Activated B cell treated with CpG ODN at 0.5 μM for 24 hours (primary cell): ENCODE measurements at regions of chr6 and their contacts with region 1.

Region 1: GRCh38 chr6:137415127-137415833 is 78.9 kb downstream of the OLIG3 start:
- DNase-seq: peak; percentile 27
- ATAC-seq: peak; percentile 93
- H3K4me3 Mint-ChIP-seq: peak overlapping the region; percentile 84
- H3K27ac Mint-ChIP-seq: peak overlapping the region; percentile 61
- H3K4me1 Mint-ChIP-seq: peaks cover 11% of the 10 kb centered on the region
- H3K27me3 Mint-ChIP-seq: peaks cover 2% of the 10 kb centered on the region
- CTCF ChIP-seq: no peak

Region 2: GRCh38 chr6:136967876-136968752 is 447.2 kb before region 1 on chr6:
- CTCF ChIA-PET with region 1: no interaction called
- POLR2A ChIA-PET with region 1: no interaction called
- intact Hi-C with region 1: loop called (anchors 5 kb)
- DNase-seq: peak; percentile 39
- ATAC-seq: peak; percentile 93
- H3K4me3 Mint-ChIP-seq: no peak overlapping the region
- H3K27ac Mint-ChIP-seq: no peak overlapping the region
- H3K4me1 Mint-ChIP-seq: peaks cover 4% of the 10 kb centered on the region
- H3K27me3 Mint-ChIP-seq: peaks cover 12% of the 10 kb centered on the region
- CTCF ChIP-seq: peak; percentile 22

Region 3: GRCh38 chr6:137155830-137156229 is 259.4 kb before region 1 on chr6:
- CTCF ChIA-PET with region 1: no interaction called
- POLR2A ChIA-PET with region 1: interaction called, 12 read pairs
- intact Hi-C with region 1: no loop called
- DNase-seq: no peak
- ATAC-seq: peak; percentile 75
- H3K4me3 Mint-ChIP-seq: peak overlapping the region; percentile 52
- H3K27ac Mint-ChIP-seq: peak overlapping the region; percentile 59
- H3K4me1 Mint-ChIP-seq: peaks cover 21% of the 10 kb centered on the region
- H3K27me3 Mint-ChIP-seq: no peaks in the 10 kb centered on the region
- CTCF ChIP-seq: no peak

Region 4: DNA sequence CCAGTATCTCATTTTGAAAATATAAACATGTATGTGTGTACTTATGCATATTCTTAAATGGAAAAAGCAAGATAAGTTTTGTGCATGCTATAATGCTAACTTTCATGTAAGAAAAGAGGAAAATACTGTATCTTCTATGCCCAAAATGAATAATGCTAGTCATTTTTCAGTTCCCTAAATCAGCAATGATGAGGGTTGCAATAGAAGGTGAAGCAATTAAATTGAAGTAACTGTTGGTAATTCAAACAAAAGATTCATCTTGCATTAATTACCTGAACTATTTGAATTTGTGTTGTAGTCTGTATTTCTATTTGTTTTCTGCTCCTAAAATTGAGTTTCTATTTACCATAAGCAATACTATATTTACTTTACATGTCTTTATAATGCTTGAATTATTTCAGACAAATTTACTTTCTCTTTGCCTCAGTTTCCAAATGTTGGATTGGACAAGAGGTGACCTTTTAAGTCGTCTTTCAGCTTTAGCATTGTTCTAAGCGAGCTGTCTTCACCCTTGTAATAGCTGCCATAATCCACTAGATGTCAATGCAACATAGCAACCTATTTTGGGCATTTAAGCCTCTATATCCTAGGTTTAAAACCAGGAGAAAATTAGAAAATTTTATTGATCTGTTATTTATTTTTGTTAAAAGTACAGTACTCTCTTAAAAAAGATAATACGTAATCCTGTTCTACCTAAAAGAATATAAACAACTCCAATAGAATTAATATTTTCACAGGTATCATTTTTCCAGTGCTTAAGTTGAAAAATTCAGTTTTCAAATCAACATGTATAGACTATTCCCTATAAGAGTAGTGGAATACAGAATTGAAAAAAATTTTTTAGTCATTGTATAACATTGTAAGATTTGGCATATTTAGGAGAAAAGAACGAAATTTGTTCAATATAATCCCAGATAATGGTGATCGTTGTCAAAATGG is 143.8 kb before region 1 on chr6:
- CTCF ChIA-PET with region 1: no interaction called
- POLR2A ChIA-PET with region 1: no interaction called
- intact Hi-C with region 1: loop called (anchors 1 kb)
- DNase-seq: no peak
- ATAC-seq: peak; percentile 75
- H3K4me3 Mint-ChIP-seq: no peak overlapping the region
- H3K27ac Mint-ChIP-seq: no peak overlapping the region
- H3K4me1 Mint-ChIP-seq: peaks cover 20% of the 10 kb centered on the region
- H3K27me3 Mint-ChIP-seq: no peaks in the 10 kb centered on the region
- CTCF ChIP-seq: peak; percentile 61

Region 5: GRCh38 chr6:137341681-137342195 is 73.5 kb before region 1 on chr6:
- CTCF ChIA-PET with region 1: interaction called, 8 read pairs
- POLR2A ChIA-PET with region 1: no interaction called
- intact Hi-C with region 1: loop called (anchors 1 kb)
- DNase-seq: no peak
- ATAC-seq: no peak
- H3K4me3 Mint-ChIP-seq: no peak overlapping the region
- H3K27ac Mint-ChIP-seq: no peak overlapping the region
- H3K4me1 Mint-ChIP-seq: peaks cover 11% of the 10 kb centered on the region
- H3K27me3 Mint-ChIP-seq: peaks cover 5% of the 10 kb centered on the region
- CTCF ChIP-seq: no peak

Region 6: DNA sequence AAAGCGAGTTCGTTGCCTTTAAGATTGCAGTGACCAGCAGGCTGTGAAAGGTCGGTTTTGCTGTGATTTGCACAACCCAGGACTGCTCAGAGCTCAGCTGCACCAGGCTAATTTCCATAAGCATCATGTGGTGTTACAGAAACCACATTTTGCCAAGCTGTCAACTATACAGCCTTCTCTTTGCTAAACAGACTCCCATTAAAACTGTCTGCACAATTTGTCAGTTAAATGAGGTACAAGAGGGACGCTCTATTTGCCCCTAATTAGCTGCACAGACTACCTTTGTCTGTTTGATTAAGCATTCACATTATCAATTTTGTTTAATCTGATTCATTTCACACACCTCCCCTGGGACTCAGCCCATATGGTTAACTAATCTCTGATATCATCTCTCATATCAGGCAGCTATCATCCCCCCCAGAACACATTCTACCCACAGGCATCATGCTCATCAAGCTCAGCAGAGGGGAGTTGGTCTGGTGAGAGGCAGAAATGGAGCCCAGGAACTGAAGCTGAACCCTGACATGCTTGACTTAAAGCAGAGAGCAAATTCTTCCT is 16.9 kb after region 1 on chr6:
- CTCF ChIA-PET with region 1: interaction called, 5 read pairs
- POLR2A ChIA-PET with region 1: interaction called, 4 read pairs
- intact Hi-C with region 1: loop called (anchors 1 kb)
- DNase-seq: no peak
- ATAC-seq: peak; percentile 65
- H3K4me3 Mint-ChIP-seq: peak overlapping the region; percentile 81
- H3K27ac Mint-ChIP-seq: peak overlapping the region; percentile 26
- H3K4me1 Mint-ChIP-seq: peaks cover 40% of the 10 kb centered on the region
- H3K27me3 Mint-ChIP-seq: no peaks in the 10 kb centered on the region
- CTCF ChIP-seq: no peak

Region 7: GRCh38 chr6:137489046-137490005 is 74.0 kb after region 1 on chr6:
- CTCF ChIA-PET with region 1: no interaction called
- POLR2A ChIA-PET with region 1: no interaction called
- intact Hi-C with region 1: loop called (anchors 2 kb)
- DNase-seq: no peak
- ATAC-seq: peak; percentile 10
- H3K4me3 Mint-ChIP-seq: peak overlapping the region; percentile 33
- H3K27ac Mint-ChIP-seq: no peak overlapping the region
- H3K4me1 Mint-ChIP-seq: peaks cover 47% of the 10 kb centered on the region
- H3K27me3 Mint-ChIP-seq: peaks cover 78% of the 10 kb centered on the region
- CTCF ChIP-seq: no peak